Ovary (tissue), 10 donors: ENCODE measurements at regions of chrX and their contacts with region 1.

Region 1: DNA sequence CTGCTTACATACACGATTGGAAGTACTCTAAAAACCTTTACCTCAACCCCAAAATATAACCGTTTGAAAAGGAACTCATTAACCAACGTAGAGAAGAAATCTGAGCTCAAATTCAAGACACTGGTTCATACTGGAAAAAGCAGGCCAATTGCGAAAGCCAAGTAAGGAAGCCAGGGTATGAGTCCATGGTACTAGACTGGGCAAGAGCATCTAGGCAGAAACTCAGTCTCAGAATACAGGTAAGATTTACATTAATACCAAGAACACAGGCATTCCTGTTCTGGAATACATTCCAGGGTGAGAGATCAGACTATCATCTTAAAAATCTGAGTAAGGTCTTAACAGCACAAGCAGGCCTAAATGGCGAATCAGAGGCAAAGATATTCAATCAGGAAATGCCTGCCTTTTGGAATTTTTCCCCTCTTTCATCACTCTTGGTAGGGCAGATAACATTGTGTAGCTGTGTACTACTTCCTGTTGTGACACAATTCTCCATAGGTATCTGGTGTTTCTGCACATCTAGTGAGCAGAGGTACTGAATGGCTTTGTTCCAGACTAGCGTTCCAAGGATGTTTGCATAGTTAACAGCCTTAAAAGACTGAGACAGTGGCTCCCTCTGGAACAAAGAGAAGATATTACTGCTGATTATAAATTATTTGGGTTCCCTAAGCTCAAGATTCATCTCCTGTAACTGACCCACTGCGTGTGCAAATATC is 311.3 kb downstream of the PCDH19 start:
- DNase-seq: no peak
- H3K4me3 ChIP-seq: no peak overlapping the region
- H3K27ac ChIP-seq: no peak overlapping the region
- H3K4me1 ChIP-seq: no peaks in the 10 kb centered on the region
- H3K27me3 ChIP-seq: no peaks in the 10 kb centered on the region
- CTCF ChIP-seq: no peak
- EP300 ChIP-seq: no peak
- POLR2A ChIP-seq: no peak

Region 2: DNA sequence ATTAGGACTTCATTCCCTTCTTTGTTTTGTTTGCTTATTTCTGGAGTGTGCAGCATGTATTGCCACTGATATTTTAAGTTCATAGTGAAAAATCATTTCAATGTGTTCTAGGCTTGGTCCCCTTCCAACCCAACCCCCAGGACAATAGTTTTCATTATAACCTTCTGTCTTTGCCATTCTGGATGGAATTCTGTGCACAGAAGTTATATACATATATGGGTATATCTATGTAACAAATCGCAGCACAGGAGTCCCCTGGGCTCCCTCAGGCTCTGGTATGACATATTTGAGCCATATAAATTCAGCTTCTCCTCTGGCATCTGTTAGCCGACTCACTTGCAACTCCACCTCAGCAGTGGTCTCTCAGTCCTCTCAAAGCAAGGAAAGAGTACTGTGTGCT is 485.8 kb after region 1 on chrX and contains the start of gene TNMD:
- intact Hi-C with region 1: loop called in 1 of 4 experiments (anchors 5 kb)
- DNase-seq: no peak
- H3K4me3 ChIP-seq: no peak within 1 kb of the TSS
- H3K27ac ChIP-seq: no peak within 1 kb of the TSS
- H3K4me1 ChIP-seq: no peaks in the 10 kb centered on the region
- H3K27me3 ChIP-seq: no peaks in the 10 kb centered on the region
- CTCF ChIP-seq: no peak
- EP300 ChIP-seq: no peak
- POLR2A ChIP-seq: no peak
- total RNA-seq, gene TNMD: 0.42 to 8.5 (median 1.4) TPM

Region 3: GRCh38 chrX:100615005-100615404 is 516.2 kb after region 1 on chrX:
- intact Hi-C with region 1: no loop called
- DNase-seq: peak in 4 of 5 donors; percentile 32 to 48 (median 46)
- H3K4me3 ChIP-seq: no peak overlapping the region
- H3K27ac ChIP-seq: no peak overlapping the region
- H3K4me1 ChIP-seq: no peaks in the 10 kb centered on the region
- H3K27me3 ChIP-seq: no peaks in the 10 kb centered on the region
- CTCF ChIP-seq: peak in 2 of 3 donors; percentile 27 to 48
- EP300 ChIP-seq: no peak
- POLR2A ChIP-seq: no peak

Region 4: DNA sequence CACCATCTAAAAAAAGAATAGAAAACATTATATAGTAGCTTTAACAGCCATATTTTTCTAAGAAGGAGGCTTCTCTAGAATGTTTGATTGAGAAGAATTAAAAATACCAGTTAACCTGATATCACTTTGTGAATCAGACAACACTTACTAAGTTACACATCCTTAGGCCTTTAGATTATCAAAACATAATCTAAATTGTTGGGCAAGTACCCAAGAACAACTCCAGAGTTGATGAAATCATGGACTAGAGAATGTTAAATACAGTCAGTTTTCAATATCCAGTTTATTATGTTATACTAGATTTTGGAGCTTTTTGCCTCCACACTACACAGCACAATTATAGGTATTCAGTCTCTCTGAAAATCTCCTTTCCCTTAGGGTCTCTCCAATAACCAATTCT is 910.3 kb after region 1 on chrX:
- intact Hi-C with region 1: no loop called
- DNase-seq: no peak
- H3K4me3 ChIP-seq: no peak overlapping the region
- H3K27ac ChIP-seq: no peak overlapping the region
- H3K4me1 ChIP-seq: no peaks in the 10 kb centered on the region
- H3K27me3 ChIP-seq: no peaks in the 10 kb centered on the region
- CTCF ChIP-seq: no peak
- EP300 ChIP-seq: no peak
- POLR2A ChIP-seq: no peak